Caco-2 (cell line): ENCODE measurements at regions of chr1 and their contacts with region 1.

Region 1: GRCh38 chr1:8560611-8561544 is 243.0 kb downstream of the SLC45A1 start:
- DNase-seq: peak in 1 of 2 experiments; percentile 42
- H3K4me3 ChIP-seq: no peak overlapping the region
- H3K4me3 Mint-ChIP-seq: no peak overlapping the region
- H3K27ac Mint-ChIP-seq: no peak overlapping the region
- H3K4me1 ChIP-seq: peaks cover 50% of the 10 kb centered on the region
- H3K4me1 Mint-ChIP-seq: peaks cover 27% of the 10 kb centered on the region
- H3K27me3 ChIP-seq: no peaks in the 10 kb centered on the region
- H3K27me3 Mint-ChIP-seq: no peaks in the 10 kb centered on the region
- CTCF ChIP-seq: peak; percentile 72 to 73

Region 2: DNA sequence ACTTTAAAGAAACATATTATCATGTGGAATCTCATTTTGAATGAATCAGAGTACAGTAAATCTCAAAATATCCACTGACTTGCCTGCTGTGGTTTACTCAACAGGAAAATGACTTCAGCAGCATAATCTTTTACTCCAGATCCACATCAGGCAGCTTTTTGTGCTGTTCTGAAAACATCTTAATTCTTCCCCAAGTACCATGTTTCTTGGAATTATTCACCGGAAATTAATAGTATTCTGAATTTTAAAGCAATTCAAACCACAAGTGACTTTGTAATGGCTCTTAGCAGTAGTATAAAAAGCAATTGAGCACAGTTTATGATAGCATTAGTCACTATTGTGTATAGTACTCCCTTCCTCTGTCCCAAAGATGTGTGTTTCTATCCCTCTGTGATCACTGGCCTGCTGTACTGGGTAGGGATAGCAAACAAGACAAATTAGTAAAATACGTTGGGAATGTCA is 470.6 kb before region 1 on chr1:
- CTCF ChIA-PET with region 1: no interaction called
- POLR2A ChIA-PET with region 1: no interaction called
- intact Hi-C with region 1: no loop called
- DNase-seq: no peak
- H3K4me3 ChIP-seq: no peak overlapping the region
- H3K4me3 Mint-ChIP-seq: no peak overlapping the region
- H3K27ac Mint-ChIP-seq: no peak overlapping the region
- H3K4me1 ChIP-seq: peaks cover 14% of the 10 kb centered on the region
- H3K4me1 Mint-ChIP-seq: peaks cover 17% of the 10 kb centered on the region
- H3K27me3 ChIP-seq: no peaks in the 10 kb centered on the region
- H3K27me3 Mint-ChIP-seq: no peaks in the 10 kb centered on the region
- CTCF ChIP-seq: no peak

Region 3: DNA sequence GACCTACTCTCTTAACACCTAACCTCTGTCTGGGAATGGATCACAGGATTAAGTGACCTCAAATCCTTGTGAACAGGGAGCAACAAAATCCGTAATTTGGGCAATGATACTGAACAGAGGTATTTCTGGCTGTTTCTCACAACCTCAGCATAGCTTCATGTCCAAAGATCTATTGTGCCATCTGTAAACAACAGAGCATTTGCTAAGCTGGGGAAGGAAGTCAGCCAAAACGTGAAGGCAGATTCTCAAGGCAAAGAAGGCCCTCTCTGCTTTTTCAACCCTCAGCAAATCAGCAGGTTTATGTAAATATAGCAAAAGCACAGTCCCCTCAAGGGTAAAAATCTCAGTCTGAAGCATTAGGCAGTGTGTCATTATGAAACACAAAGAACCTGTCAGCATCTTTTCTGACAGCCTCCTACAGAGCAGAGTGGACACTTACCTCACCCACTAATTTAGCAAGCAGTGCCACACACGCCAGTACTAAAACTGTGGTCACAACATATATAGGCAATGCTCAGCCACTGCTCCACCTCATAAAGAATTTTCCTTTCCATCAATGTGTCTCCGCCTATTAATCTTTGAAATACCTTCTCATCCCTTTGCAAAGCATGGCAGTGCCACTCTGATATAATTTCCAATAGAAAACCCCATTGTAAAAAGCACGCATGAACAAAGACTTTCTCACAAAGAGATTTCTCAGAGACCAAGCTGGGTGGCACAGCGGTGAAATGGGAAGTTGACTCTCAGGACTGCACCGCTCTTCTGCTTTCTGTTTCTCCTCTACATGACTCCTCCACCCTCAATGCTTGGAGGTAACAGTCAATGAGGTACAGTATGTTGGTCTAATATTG is 68.6 kb after region 1 on chr1:
- CTCF ChIA-PET with region 1: no interaction called
- POLR2A ChIA-PET with region 1: no interaction called
- intact Hi-C with region 1: loop called (anchors 5 kb)
- DNase-seq: no peak
- H3K4me3 ChIP-seq: no peak overlapping the region
- H3K4me3 Mint-ChIP-seq: no peak overlapping the region
- H3K27ac Mint-ChIP-seq: peak overlapping the region; percentile 9
- H3K4me1 ChIP-seq: peaks cover 56% of the 10 kb centered on the region
- H3K4me1 Mint-ChIP-seq: peaks cover 47% of the 10 kb centered on the region
- H3K27me3 ChIP-seq: no peaks in the 10 kb centered on the region
- H3K27me3 Mint-ChIP-seq: no peaks in the 10 kb centered on the region
- CTCF ChIP-seq: no peak

Region 4: DNA sequence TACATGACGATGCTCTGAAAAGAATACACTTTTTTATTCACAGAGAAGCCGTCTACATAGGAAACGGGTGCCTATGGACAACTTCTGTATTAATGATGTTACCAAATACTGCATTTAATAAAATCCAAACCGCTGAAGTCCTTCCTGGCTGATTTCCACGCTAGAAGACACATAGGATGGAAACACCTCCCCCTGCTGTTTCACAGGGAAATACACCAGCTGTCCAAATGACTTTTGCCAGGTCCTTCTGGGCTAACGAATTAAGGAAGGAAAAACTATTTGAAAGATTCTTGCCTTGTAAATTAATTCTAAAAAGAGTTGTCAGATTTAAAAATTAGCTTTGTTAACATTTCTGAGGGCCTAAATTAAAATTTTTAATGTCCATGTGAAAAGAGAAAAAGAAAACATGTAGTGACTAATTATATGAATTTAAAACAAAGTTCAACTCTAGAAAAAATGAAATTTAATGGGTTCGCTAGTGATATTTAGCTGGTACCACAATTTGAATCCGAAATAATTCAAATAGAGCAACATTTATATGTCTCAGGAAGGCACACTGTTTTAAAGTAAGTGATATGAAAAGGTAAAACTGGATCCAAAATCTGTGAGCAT is 110.5 kb after region 1 on chr1:
- CTCF ChIA-PET with region 1: interaction called, 5 read pairs
- POLR2A ChIA-PET with region 1: no interaction called
- intact Hi-C with region 1: loop called (anchors 1 kb)
- DNase-seq: peak in 1 of 2 experiments; percentile 44
- H3K4me3 ChIP-seq: no peak overlapping the region
- H3K4me3 Mint-ChIP-seq: no peak overlapping the region
- H3K27ac Mint-ChIP-seq: peak overlapping the region; percentile 33
- H3K4me1 ChIP-seq: peaks cover 38% of the 10 kb centered on the region
- H3K4me1 Mint-ChIP-seq: peaks cover 23% of the 10 kb centered on the region
- H3K27me3 ChIP-seq: no peaks in the 10 kb centered on the region
- H3K27me3 Mint-ChIP-seq: no peaks in the 10 kb centered on the region
- CTCF ChIP-seq: peak; percentile 61 to 80

Region 5: GRCh38 chr1:8727809-8728213 is 166.9 kb after region 1 on chr1:
- CTCF ChIA-PET with region 1: interaction called, 13 read pairs
- POLR2A ChIA-PET with region 1: no interaction called
- intact Hi-C with region 1: loop called (anchors 1 kb)
- DNase-seq: no peak
- H3K4me3 ChIP-seq: no peak overlapping the region
- H3K4me3 Mint-ChIP-seq: no peak overlapping the region
- H3K27ac Mint-ChIP-seq: no peak overlapping the region
- H3K4me1 ChIP-seq: peaks cover 9% of the 10 kb centered on the region; the same call in 1 of the 2 replicates
- H3K4me1 Mint-ChIP-seq: peaks cover 5% of the 10 kb centered on the region
- H3K27me3 ChIP-seq: no peaks in the 10 kb centered on the region
- H3K27me3 Mint-ChIP-seq: no peaks in the 10 kb centered on the region
- CTCF ChIP-seq: no peak